ENCODE measurements at regions of chr5 and their contacts with region 1.

Region 1: GRCh38 chr5:39933061-39933460 is 508.3 kb upstream of the DAB2 start:
- DNase-seq: no peak
- ATAC-seq: no peak
- H3K4me3 ChIP-seq: no peak overlapping the region
- H3K27ac ChIP-seq: no peak overlapping the region
- H3K4me1 ChIP-seq: no peaks in the 10 kb centered on the region
- H3K27me3 ChIP-seq: peaks cover 0 to 5% (median 0%) of the 10 kb centered on the region in 7 donors
- CTCF ChIP-seq: no peak

Region 2: DNA sequence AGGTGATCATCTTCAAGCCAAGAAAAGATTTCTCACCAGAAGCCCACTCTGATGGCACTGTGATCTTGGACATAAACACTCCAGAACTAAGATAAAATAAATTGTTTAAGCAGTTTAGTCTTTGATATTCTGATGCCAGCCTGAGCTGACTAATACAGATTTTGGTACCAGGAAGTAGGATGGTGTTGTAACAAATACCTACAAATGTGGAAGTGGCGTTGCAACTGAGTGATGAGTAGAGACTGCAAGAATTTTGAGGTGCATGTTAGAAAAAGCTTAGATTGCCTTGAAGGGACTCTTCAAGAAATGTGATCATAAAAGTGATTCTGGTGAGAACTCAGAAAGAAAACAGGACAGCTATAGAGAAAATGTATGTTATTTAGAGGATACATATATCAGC is 84.1 kb after region 1 on chr5:
- intact Hi-C with region 1: no loop called
- DNase-seq: no peak
- ATAC-seq: no peak
- H3K4me3 ChIP-seq: no peak overlapping the region
- H3K27ac ChIP-seq: no peak overlapping the region
- H3K4me1 ChIP-seq: no peaks in the 10 kb centered on the region
- H3K27me3 ChIP-seq: no peaks in the 10 kb centered on the region
- CTCF ChIP-seq: no peak

Region 3: GRCh38 chr5:40165794-40166728 is 233.0 kb after region 1 on chr5:
- intact Hi-C with region 1: loop called in 1 of 10 experiments (anchors 10 kb)
- DNase-seq: no peak
- ATAC-seq: no peak
- H3K4me3 ChIP-seq: no peak overlapping the region
- H3K27ac ChIP-seq: no peak overlapping the region
- H3K4me1 ChIP-seq: no peaks in the 10 kb centered on the region
- H3K27me3 ChIP-seq: no peaks in the 10 kb centered on the region
- CTCF ChIP-seq: peak in 5 of 9 donors; percentile 21 to 51 (median 32)

Region 4: DNA sequence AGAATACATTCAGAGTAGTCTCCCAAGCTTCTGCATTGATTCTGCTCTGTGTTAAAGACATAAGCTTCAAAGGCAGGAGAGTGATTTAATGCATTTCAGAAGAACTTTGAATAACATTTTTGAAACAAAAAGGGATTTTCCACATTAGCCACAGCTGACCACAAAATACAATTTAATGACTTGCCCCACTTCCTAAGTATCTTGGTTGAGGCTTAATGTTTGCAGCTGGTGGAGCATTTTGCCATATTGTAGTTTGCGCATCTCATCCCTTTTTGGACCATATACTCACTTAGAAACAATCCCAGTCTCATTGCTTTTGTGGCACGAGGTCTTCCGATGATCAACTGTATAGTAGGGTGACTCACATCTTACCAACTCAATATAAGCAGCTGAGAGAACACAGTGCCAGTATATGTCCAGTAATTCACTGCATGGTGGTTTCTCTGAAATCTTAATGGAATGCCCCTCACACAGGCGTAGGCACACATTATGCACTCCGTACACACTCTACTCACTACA is 290.9 kb after region 1 on chr5:
- intact Hi-C with region 1: no loop called
- DNase-seq: no peak
- ATAC-seq: no peak
- H3K4me3 ChIP-seq: no peak overlapping the region
- H3K27ac ChIP-seq: no peak overlapping the region
- H3K4me1 ChIP-seq: peaks cover 0 to 5% (median 0%) of the 10 kb centered on the region in 9 donors
- H3K27me3 ChIP-seq: no peaks in the 10 kb centered on the region
- CTCF ChIP-seq: no peak